H1 (cell line): ENCODE measurements at regions of chr22 and their contacts with region 1.

Region 1: DNA sequence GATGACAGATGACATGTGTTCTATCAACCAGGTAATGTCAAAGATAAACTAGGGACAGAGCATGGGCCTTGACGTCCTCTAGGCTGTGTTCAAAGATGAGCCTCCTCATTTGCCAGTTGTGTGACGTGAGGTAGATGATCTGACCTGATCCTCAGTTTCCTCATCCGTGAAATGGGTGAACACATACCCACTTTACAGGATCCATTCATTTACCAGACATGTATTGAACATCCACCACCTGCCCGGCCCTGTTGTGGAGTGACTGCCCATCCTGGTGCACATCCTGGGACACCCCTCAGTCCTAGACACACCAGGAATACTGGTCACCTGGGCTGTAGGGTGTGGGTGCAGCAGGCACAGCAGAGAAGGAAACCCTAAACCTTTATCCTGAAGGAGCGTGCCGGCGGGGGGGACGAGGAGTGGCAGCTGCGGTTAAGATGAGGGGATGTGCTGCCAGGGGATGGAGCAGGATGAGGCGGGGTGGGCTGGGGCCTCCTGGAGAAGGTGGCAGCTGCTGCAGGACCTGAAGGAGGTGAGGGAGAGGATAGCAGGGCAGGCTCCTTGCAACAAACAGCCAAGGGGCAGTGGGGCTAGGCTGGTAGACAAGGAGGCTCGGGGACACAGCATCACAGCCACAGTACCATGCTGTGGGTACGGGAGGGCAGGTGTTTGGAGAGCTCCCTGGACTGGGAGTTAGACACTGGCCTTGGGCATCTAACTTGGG is 8.4 kb downstream of the CLDN5 start:
- DNase-seq: no peak
- H3K4me3 ChIP-seq: no peak overlapping the region
- H3K27ac ChIP-seq: no peak overlapping the region
- H3K4me1 ChIP-seq: 0 out of 7 replicates have a peak, but pooled peaks cover 0 to 3% (median 0%) of the 10 kb centered on the region in 4 experiments
- H3K27me3 ChIP-seq: no peaks in the 10 kb centered on the region
- CTCF ChIP-seq: no peak
- EP300 ChIP-seq: no peak
- POLR2A ChIP-seq: no peak
- RAD21 ChIP-seq: no peak

Region 2: GRCh38 chr22:19504900-19505734 is 10.7 kb before region 1 on chr22:
- CTCF ChIA-PET with region 1: interaction called, 4 read pairs
- POLR2A ChIA-PET with region 1: interaction called, 10 read pairs
- DNase-seq: no peak
- H3K4me3 ChIP-seq: no peak overlapping the region
- H3K27ac ChIP-seq: no peak overlapping the region
- H3K4me1 ChIP-seq: no peaks in the 10 kb centered on the region; a peak in 3 of 7 replicates
- H3K27me3 ChIP-seq: no peaks in the 10 kb centered on the region
- CTCF ChIP-seq: no peak
- EP300 ChIP-seq: no peak
- POLR2A ChIP-seq: no peak
- RAD21 ChIP-seq: no peak

Region 3: DNA sequence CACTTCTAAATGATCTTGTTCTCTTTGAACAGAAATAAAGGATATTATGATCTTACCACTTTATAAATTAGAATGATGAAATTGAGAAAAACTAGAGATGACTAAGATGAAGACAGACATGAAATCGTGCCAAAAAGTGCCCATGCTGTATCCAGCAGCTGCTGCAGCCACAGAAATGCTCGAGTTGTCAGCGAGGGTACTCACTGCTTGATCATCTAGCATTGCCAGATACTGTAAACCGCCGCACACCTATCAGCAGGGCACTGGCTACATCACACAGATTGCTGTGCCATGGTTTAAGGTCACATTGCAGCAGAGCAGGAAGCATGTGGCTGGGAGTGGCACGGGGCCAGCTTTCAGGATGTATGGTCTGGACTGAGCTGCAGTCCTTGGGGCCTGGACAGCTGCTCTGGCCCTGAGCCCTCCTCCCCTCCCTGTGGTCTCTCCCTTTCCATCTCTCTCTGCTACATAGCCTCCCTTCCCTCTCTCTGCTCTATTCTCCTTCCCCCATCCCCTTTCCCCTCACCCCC is 147.5 kb after region 1 on chr22:
- CTCF ChIA-PET with region 1: no interaction called
- POLR2A ChIA-PET with region 1: no interaction called
- DNase-seq: no peak
- H3K4me3 ChIP-seq: no peak overlapping the region
- H3K27ac ChIP-seq: no peak overlapping the region
- H3K4me1 ChIP-seq: peaks cover 0 to 9% (median 3%) of the 10 kb centered on the region in 4 experiments; a peak in 5 of 7 replicates
- H3K27me3 ChIP-seq: peaks cover 0 to 3% (median 0%) of the 10 kb centered on the region in 4 experiments; a peak in 2 of 7 replicates
- CTCF ChIP-seq: no peak
- EP300 ChIP-seq: no peak
- POLR2A ChIP-seq: no peak
- RAD21 ChIP-seq: no peak